ENCODE measurements at regions of chr17 and their contacts with region 1.

Region 1: DNA sequence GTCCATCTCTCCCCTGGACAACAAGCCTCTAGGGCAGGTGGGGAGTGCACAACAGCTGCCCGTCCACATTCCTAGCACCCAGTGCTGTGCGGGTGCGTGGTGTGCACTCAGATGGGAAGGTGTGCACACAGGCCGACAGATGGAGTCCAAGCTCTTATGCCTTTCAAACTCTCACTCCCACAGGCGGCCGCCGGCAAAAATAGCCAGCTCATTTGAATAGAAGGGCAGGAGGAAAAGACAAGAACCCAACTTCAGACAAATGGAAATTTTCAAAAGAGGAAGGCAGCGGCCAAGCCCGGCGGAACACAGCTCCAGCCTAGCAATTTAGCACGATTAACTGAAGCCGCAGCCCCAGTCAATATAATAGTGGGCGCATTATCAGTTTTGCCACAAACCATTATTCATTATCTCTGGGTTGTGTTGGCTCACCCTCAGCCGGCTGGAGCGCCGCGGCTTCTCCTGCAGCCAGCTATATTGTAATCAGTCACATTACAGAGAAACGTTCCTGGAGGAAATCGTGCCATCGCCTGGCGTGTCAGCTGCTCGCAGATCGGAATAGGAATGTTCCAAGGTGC is 103.9 kb upstream of the SEC14L1 start:
- DNase-seq: no peak
- ATAC-seq: no peak
- H3K4me3 ChIP-seq: no peak overlapping the region
- H3K27ac ChIP-seq: no peak overlapping the region
- H3K4me1 ChIP-seq: no peaks in the 10 kb centered on the region
- H3K27me3 ChIP-seq: peaks cover 3 to 13% (median 8%) of the 10 kb centered on the region in 3 donors
- CTCF ChIP-seq: no peak
- POLR2A ChIP-seq: no peak

Region 2: GRCh38 chr17:77734341-77735080 is 697.6 kb after region 1 on chr17:
- in situ Hi-C with region 1: loop called in 1 of 4 experiments (anchors 25 kb)
- intact Hi-C with region 1: no loop called
- DNase-seq: peak; percentile 58 to 72
- ATAC-seq: peak; percentile 65 to 71
- H3K4me3 ChIP-seq: peak overlapping the region in 1 of 4 donors; percentile 24
- H3K27ac ChIP-seq: peak overlapping the region; percentile 57 to 74 (median 66)
- H3K4me1 ChIP-seq: peaks cover 27 to 28% of the 10 kb centered on the region in 2 donors
- H3K27me3 ChIP-seq: peaks cover 0 to 17% (median 13%) of the 10 kb centered on the region in 3 donors
- CTCF ChIP-seq: no peak
- POLR2A ChIP-seq: no peak